HCT116 (cell line): ENCODE measurements at regions of chr12 and their contacts with region 1.

Region 1: GRCh38 chr12:72264548-72265175 is 7.5 kb upstream of the TRHDE start:
- DNase-seq: no peak
- ATAC-seq: peak; percentile 64; the same call in 1 of the 2 replicates
- H3K4me3 ChIP-seq: no peak overlapping the region
- H3K27ac ChIP-seq: no peak overlapping the region
- H3K4me1 ChIP-seq: no peaks in the 10 kb centered on the region
- H3K27me3 ChIP-seq: no peaks in the 10 kb centered on the region
- CTCF ChIP-seq: peak; percentile 37 to 61 (median 57); a peak in 5 of 6 replicates
- POLR2A ChIP-seq: no peak
- RAD21 ChIP-seq: peak; percentile 55

Region 2: GRCh38 chr12:72282721-72283120 is 18.1 kb after region 1 on chr12:
- CTCF ChIA-PET with region 1: interaction called, 18 read pairs
- POLR2A ChIA-PET with region 1: no interaction called
- RAD21 ChIA-PET with region 1: no interaction called
- intact Hi-C with region 1: no loop called
- DNase-seq: no peak
- ATAC-seq: peak; percentile 88
- H3K4me3 ChIP-seq: no peak overlapping the region
- H3K27ac ChIP-seq: no peak overlapping the region
- H3K4me1 ChIP-seq: no peaks in the 10 kb centered on the region
- H3K27me3 ChIP-seq: no peaks in the 10 kb centered on the region
- CTCF ChIP-seq: peak; percentile 51 to 82 (median 73); a peak in 5 of 6 replicates
- POLR2A ChIP-seq: no peak
- RAD21 ChIP-seq: peak; percentile 66